Heart left ventricle (tissue), 16 donors: ENCODE measurements at regions of chr9 and their contacts with region 1.

Region 1: DNA sequence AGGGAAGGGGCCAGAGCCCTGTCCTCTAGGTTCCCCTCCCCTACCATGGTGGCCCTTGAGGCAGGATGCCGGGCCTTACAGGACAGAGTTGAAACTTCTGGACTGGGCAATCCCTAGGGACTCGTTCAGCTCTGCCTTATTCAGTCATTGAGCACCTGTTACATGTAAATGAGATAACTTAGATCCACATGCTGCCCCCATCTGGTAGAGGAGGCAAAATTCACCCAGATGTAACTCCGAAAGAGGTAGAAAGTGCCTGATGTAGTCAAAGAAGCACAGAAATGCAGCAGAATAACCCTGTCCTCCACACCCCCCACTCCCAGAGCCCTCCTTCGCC is 1.5 kb downstream of the GGTA1 start:
- DNase-seq: peak in 3 of 5 donors; percentile 56 to 75 (median 61)
- ATAC-seq: peak; percentile 33 to 70 (median 58)
- H3K4me3 ChIP-seq: peak overlapping the region in 11 of 12 donors; percentile 53 to 85 (median 69)
- H3K27ac ChIP-seq: peak overlapping the region in 9 of 12 donors; percentile 7 to 95 (median 85)
- H3K4me1 ChIP-seq: peaks cover 0 to 60% (median 18%) of the 10 kb centered on the region in 12 donors
- H3K27me3 ChIP-seq: peaks cover 0 to 3% (median 0%) of the 10 kb centered on the region in 9 donors
- CTCF ChIP-seq: peak; percentile 52 to 79 (median 64)
- POLR2A ChIP-seq: no peak

Region 2: GRCh38 chr9:121463026-121463807 is 34.9 kb before region 1 on chr9:
- intact Hi-C with region 1: loop called (anchors 1 to 5 kb)
- DNase-seq: peak; percentile 51 to 73 (median 59)
- ATAC-seq: peak in 3 of 4 donors; percentile 58 to 81 (median 65)
- H3K4me3 ChIP-seq: no peak overlapping the region
- H3K27ac ChIP-seq: no peak overlapping the region
- H3K4me1 ChIP-seq: peaks cover 0 to 24% (median 9%) of the 10 kb centered on the region in 12 donors
- H3K27me3 ChIP-seq: no peaks in the 10 kb centered on the region
- CTCF ChIP-seq: peak; percentile 63 to 88 (median 80)
- POLR2A ChIP-seq: no peak

Region 3: DNA sequence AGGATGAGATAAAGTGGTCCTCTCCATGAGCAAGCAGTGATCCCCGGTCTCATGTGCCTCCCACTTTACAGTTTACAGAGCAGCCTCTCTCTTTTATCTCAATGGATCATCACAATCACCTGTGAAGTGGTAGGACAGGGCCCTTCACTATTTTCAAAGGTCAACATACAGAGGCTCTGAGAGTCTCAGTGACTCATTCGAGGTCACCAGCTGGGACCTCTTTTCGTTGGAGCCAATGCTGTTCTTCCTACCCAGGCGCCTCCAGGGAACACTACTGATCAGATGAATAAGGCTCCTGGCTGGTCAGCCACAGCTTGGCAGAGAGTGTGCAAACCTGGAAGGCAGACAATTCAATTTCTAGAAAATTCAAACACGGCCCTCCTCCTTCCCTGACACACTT is 15.1 kb before region 1 on chr9:
- intact Hi-C with region 1: no loop called
- DNase-seq: no peak
- ATAC-seq: peak in 2 of 4 donors; percentile 20 to 55
- H3K4me3 ChIP-seq: no peak overlapping the region
- H3K27ac ChIP-seq: peak overlapping the region in 1 of 12 donors; percentile 15
- H3K4me1 ChIP-seq: peaks cover 0 to 78% (median 53%) of the 10 kb centered on the region in 12 donors
- H3K27me3 ChIP-seq: no peaks in the 10 kb centered on the region
- CTCF ChIP-seq: no peak
- POLR2A ChIP-seq: no peak

Region 4: DNA sequence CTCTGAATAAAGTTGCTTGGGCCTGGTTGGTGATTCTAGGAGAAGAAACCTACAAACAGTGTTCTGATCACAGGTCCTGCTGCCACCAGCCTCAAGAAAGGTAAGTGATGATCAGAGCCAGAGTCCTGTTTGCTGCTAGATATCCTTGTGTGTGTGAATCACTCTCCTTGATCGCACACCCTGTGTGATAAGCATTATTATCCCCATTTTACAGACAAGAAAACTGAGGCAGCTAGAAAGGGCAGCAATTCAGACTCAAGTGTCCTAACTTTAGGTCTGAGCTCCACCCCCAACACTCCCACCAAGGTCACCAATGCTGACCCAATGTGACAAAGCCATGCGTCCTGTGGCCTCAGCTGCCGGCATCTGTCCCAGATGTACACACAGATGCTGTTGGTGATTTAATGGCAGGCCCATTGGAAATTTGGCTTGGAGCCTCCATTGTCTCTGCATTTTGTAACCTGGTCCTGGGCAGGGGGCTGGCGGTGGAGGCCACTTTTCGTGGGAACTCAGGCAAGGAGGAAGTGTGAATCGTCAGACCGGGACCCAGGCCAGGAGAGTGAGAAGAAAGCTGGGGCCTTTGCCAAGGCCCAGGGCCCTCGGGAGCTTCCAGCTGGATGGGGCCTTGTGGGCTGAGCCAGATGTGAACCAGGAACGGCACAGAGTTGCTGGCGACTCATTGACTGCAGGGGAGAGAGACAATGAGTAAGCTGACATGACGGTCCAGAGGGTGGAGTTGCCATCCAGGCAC is 31.3 kb after region 1 on chr9:
- intact Hi-C with region 1: loop called in 3 of 10 experiments (anchors 2 to 5 kb)
- DNase-seq: peak; percentile 96 to 99 (median 97)
- ATAC-seq: peak; percentile 80 to 95 (median 90)
- H3K4me3 ChIP-seq: no peak overlapping the region
- H3K27ac ChIP-seq: peak overlapping the region in 11 of 12 donors; percentile 6 to 79 (median 65)
- H3K4me1 ChIP-seq: peaks cover 0 to 24% (median 15%) of the 10 kb centered on the region in 12 donors
- H3K27me3 ChIP-seq: no peaks in the 10 kb centered on the region
- CTCF ChIP-seq: no peak
- POLR2A ChIP-seq: no peak

Region 5: GRCh38 chr9:121538246-121538645 is 40.1 kb after region 1 on chr9:
- intact Hi-C with region 1: loop called in 2 of 10 experiments (anchors 5 kb)
- DNase-seq: no peak
- ATAC-seq: peak; percentile 39 to 64 (median 49)
- H3K4me3 ChIP-seq: no peak overlapping the region
- H3K27ac ChIP-seq: no peak overlapping the region
- H3K4me1 ChIP-seq: peaks cover 0 to 18% (median 8%) of the 10 kb centered on the region in 12 donors
- H3K27me3 ChIP-seq: no peaks in the 10 kb centered on the region
- CTCF ChIP-seq: peak in 9 of 12 donors; percentile 10 to 52 (median 25)
- POLR2A ChIP-seq: no peak